GM12878 (cell line): ENCODE measurements at regions of chr3 and their contacts with region 1.

Region 1: GRCh38 chr3:183385698-183386613 is 42.5 kb downstream of the MCF2L2 start:
- DNase-seq: no peak
- ATAC-seq: peak; percentile 85
- H3K4me3 ChIP-seq: no peak overlapping the region
- H3K27ac ChIP-seq: no peak overlapping the region
- H3K4me1 ChIP-seq: peaks cover 7% of the 10 kb centered on the region; the same call in 1 of the 2 replicates
- H3K27me3 ChIP-seq: no peaks in the 10 kb centered on the region
- CTCF ChIP-seq: peak; percentile 63 to 87 (median 81); a peak in 5 of 6 replicates
- EP300 ChIP-seq: no peak
- POLR2A ChIP-seq: no peak
- RAD21 ChIP-seq: peak; percentile 84

Region 2: GRCh38 chr3:182909318-182910040 is 476.5 kb before region 1 on chr3:
- CTCF ChIA-PET with region 1: interaction called, 13 read pairs
- POLR2A ChIA-PET with region 1: no interaction called
- RAD21 ChIA-PET with region 1: interaction called, 4 read pairs
- SMC1A ChIA-PET with region 1: interaction called, 5 read pairs
- in situ Hi-C with region 1: loop called (anchors 5 kb)
- intact Hi-C with region 1: loop called (anchors 2 kb)
- DNase-seq: no peak
- ATAC-seq: peak; percentile 31; the same call in 2 of the 3 replicates
- H3K4me3 ChIP-seq: no peak overlapping the region
- H3K27ac ChIP-seq: no peak overlapping the region
- H3K4me1 ChIP-seq: peaks cover 11% of the 10 kb centered on the region
- H3K27me3 ChIP-seq: no peaks in the 10 kb centered on the region
- CTCF ChIP-seq: peak; percentile 34 to 49 (median 48); a peak in 5 of 6 replicates
- EP300 ChIP-seq: no peak
- POLR2A ChIP-seq: no peak
- RAD21 ChIP-seq: peak; percentile 45; the same call in 1 of the 2 replicates

Region 3: GRCh38 chr3:183122257-183122932 is 263.6 kb before region 1 on chr3:
- CTCF ChIA-PET with region 1: interaction called, 229 read pairs
- POLR2A ChIA-PET with region 1: interaction called, 3 read pairs
- RAD21 ChIA-PET with region 1: interaction called, 136 read pairs
- SMC1A ChIA-PET with region 1: interaction called, 187 read pairs
- in situ Hi-C with region 1: loop called (anchors 5 kb)
- intact Hi-C with region 1: loop called (anchors 1 kb)
- DNase-seq: no peak
- ATAC-seq: peak; percentile 68
- H3K4me3 ChIP-seq: no peak overlapping the region
- H3K27ac ChIP-seq: no peak overlapping the region
- H3K4me1 ChIP-seq: no peaks in the 10 kb centered on the region
- H3K27me3 ChIP-seq: no peaks in the 10 kb centered on the region
- CTCF ChIP-seq: peak; percentile 61 to 75 (median 73)
- EP300 ChIP-seq: no peak
- POLR2A ChIP-seq: no peak
- RAD21 ChIP-seq: peak; percentile 93

Region 4: DNA sequence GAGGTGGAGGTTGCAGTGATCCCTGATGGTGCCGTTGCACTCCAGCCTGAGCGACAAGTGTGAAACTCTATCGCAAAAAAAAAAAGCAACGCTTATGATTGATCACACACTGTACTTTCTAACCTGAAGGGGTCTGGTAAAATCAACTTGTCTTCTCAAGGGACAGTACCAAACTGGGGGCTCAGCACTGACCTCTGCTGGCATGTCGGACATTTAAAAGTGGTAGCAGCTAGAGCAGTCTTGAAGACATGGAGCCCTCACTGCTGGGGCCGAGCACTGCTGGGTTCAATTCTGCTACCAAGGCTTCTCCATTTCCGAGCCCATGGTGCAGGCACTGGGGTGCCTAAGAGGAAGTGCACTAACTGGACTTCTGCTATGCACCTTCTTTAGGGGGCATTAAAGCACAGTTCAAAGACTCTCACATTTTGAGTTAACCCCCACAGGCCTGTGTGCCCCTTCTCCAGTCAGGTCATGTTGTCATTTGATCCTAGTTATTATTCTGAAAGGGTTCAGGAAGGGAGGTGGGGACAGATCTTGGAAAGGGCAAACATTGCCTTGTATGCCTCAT is 197.0 kb before region 1 on chr3:
- CTCF ChIA-PET with region 1: interaction called, 400 read pairs
- POLR2A ChIA-PET with region 1: interaction called, 23 read pairs
- RAD21 ChIA-PET with region 1: interaction called, 256 read pairs
- SMC1A ChIA-PET with region 1: interaction called, 265 read pairs
- in situ Hi-C with region 1: loop called (anchors 5 kb)
- intact Hi-C with region 1: loop called (anchors 1 kb)
- DNase-seq: no peak
- ATAC-seq: peak; percentile 88
- H3K4me3 ChIP-seq: no peak overlapping the region
- H3K27ac ChIP-seq: no peak overlapping the region
- H3K4me1 ChIP-seq: peaks cover 2% of the 10 kb centered on the region; the same call in 1 of the 2 replicates
- H3K27me3 ChIP-seq: no peaks in the 10 kb centered on the region
- CTCF ChIP-seq: peak; percentile 49 to 60 (median 57); a peak in 5 of 6 replicates
- EP300 ChIP-seq: no peak
- POLR2A ChIP-seq: no peak
- RAD21 ChIP-seq: peak; percentile 61

Region 5: DNA sequence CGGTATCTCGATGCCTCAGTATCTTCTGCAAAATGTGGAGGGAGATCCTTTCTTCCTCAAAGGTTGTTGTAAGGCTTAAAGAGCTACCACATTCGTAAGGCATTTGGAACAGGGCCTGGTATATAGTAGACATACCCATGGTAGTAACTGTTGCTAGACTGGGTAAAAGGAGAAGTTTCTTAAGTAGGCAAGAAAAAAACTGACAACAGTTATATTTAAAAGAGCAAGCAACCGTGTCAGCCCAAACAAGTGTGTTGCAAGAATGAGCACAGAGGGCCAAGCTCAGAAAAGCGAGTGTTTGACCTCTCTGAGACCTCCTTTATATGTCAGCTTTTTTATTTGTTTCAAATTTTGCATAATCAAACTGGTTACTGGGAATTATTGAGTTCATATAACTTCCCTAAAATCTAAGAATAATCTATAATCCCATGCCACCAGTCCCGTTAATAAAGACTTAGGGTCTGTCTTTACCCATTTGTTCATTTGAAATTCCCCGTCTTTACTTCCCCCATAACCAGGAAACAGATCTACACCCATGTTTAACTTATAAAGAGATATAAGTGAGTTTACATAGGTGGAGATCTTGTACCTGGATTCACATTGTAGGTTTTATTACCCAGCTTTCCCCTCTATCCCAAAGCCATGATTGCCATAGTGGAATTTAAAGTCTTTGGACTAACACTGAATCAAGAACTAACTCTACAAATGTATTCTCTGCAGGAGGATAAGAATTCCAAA is 125.6 kb before region 1 on chr3:
- CTCF ChIA-PET with region 1: interaction called, 21 read pairs
- POLR2A ChIA-PET with region 1: no interaction called
- RAD21 ChIA-PET with region 1: interaction called, 4 read pairs
- SMC1A ChIA-PET with region 1: interaction called, 11 read pairs
- in situ Hi-C with region 1: no loop called
- intact Hi-C with region 1: no loop called
- DNase-seq: no peak
- ATAC-seq: no peak; the same call in none of the 3 replicates
- H3K4me3 ChIP-seq: no peak overlapping the region
- H3K27ac ChIP-seq: no peak overlapping the region
- H3K4me1 ChIP-seq: no peaks in the 10 kb centered on the region
- H3K27me3 ChIP-seq: peaks cover 0 to 5% of the 10 kb centered on the region in 2 experiments; a peak in 2 of 4 replicates
- CTCF ChIP-seq: no peak
- EP300 ChIP-seq: no peak
- POLR2A ChIP-seq: no peak
- RAD21 ChIP-seq: no peak

Region 6: DNA sequence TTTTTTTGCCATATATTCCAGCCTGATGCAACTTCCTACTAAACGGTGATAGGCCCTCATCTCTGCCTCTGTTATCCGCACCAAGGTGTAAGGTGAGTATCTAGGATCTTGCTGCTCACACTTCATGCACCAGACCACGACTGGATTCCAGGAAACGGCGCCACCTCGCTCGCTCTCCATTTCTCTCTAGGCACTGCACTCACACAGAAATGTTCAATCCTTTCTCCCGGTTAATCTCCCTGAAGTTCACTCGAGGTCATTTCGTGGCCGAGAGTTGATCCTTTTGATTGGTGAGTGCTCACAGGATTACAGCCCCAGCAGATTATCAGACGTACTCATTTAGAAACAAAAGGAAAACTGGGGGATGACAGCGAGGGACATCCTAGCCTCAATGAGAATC is 14.4 kb after region 1 on chr3:
- CTCF ChIA-PET with region 1: interaction called, 17 read pairs
- POLR2A ChIA-PET with region 1: no interaction called
- RAD21 ChIA-PET with region 1: no interaction called
- SMC1A ChIA-PET with region 1: interaction called, 9 read pairs
- in situ Hi-C with region 1: no loop called
- intact Hi-C with region 1: no loop called
- DNase-seq: no peak
- ATAC-seq: no peak
- H3K4me3 ChIP-seq: no peak overlapping the region
- H3K27ac ChIP-seq: no peak overlapping the region
- H3K4me1 ChIP-seq: no peaks in the 10 kb centered on the region
- H3K27me3 ChIP-seq: no peaks in the 10 kb centered on the region; a peak in 1 of 4 replicates
- CTCF ChIP-seq: no peak
- EP300 ChIP-seq: no peak
- POLR2A ChIP-seq: no peak
- RAD21 ChIP-seq: no peak

Region 7: DNA sequence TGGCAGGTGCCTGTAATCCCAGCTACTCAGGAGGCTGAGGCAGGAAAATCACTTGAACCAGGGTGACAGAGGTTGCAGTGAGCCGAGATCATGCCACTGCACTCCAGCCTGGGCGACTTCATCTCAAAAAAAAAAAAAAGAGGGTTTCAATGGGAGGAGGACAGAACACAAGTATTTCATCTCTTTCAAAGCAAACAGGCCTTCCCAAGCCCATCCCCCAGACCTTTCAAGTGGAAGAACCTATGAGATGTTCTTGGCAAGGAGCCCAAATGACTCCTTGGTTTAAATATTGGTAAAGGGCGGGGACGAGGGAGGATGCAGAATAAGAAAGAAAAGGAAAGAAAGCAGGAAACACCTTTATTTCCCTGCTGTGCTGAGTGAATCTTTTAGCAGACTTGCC is 104.7 kb after region 1 on chr3:
- CTCF ChIA-PET with region 1: no interaction called
- POLR2A ChIA-PET with region 1: no interaction called
- RAD21 ChIA-PET with region 1: no interaction called
- SMC1A ChIA-PET with region 1: no interaction called
- in situ Hi-C with region 1: no loop called
- intact Hi-C with region 1: no loop called
- DNase-seq: no peak
- ATAC-seq: no peak
- H3K4me3 ChIP-seq: no peak overlapping the region
- H3K27ac ChIP-seq: no peak overlapping the region
- H3K4me1 ChIP-seq: no peaks in the 10 kb centered on the region
- H3K27me3 ChIP-seq: no peaks in the 10 kb centered on the region
- CTCF ChIP-seq: no peak
- EP300 ChIP-seq: no peak
- POLR2A ChIP-seq: no peak
- RAD21 ChIP-seq: no peak

Region 8: DNA sequence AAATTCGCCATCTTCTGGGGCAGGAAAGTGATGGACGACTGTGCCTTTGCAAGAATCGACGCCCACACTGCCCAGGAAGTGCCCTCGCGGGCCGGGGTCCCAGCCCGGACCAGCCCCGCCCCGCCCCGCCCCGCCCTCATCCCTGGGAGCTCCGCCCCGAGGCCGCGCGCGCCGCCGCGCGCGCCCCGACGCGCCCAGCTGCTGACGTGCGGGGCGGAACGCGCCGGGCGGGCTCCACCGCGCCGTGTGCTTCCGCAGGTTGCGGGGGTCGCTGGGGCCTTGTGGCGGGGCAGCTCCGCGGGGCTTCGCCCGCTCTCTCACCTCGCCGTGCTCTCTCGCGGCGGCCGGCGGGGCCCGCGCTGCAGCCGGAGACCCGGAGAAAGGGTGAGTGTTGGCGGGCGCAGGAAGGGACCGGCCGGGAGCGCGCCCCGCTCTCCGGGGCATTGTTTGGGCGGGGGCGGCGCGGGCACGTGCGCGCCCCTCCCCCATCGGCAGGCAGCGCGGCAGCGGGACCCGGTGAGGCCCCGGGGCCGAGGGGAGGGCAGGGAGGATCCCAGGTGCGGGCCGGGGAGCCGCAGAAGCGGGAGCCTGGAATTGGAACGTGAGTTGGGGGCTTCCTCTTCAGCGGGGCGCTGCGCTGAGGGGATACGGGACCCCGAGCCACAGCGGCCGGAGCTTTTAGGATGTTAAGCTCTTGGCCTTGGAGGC is 311.8 kb after region 1 on chr3 and contains the start of gene YEATS2:
- CTCF ChIA-PET with region 1: no interaction called
- POLR2A ChIA-PET with region 1: no interaction called
- RAD21 ChIA-PET with region 1: no interaction called
- SMC1A ChIA-PET with region 1: no interaction called
- in situ Hi-C with region 1: no loop called
- intact Hi-C with region 1: no loop called
- DNase-seq: no peak
- ATAC-seq: peak; percentile 82
- H3K4me3 ChIP-seq: peak within 1 kb of the TSS; percentile 99
- H3K27ac ChIP-seq: peak within 1 kb of the TSS; percentile 91
- H3K4me1 ChIP-seq: no peaks in the 10 kb centered on the region
- H3K27me3 ChIP-seq: no peaks in the 10 kb centered on the region
- CTCF ChIP-seq: no peak
- EP300 ChIP-seq: no peak
- POLR2A ChIP-seq: peak; percentile 81
- RAD21 ChIP-seq: no peak
- polyA plus RNA-seq, gene YEATS2: 1.9 to 3.8 TPM